ENCODE measurements at regions of chr5 and their contacts with region 1.

Region 1: DNA sequence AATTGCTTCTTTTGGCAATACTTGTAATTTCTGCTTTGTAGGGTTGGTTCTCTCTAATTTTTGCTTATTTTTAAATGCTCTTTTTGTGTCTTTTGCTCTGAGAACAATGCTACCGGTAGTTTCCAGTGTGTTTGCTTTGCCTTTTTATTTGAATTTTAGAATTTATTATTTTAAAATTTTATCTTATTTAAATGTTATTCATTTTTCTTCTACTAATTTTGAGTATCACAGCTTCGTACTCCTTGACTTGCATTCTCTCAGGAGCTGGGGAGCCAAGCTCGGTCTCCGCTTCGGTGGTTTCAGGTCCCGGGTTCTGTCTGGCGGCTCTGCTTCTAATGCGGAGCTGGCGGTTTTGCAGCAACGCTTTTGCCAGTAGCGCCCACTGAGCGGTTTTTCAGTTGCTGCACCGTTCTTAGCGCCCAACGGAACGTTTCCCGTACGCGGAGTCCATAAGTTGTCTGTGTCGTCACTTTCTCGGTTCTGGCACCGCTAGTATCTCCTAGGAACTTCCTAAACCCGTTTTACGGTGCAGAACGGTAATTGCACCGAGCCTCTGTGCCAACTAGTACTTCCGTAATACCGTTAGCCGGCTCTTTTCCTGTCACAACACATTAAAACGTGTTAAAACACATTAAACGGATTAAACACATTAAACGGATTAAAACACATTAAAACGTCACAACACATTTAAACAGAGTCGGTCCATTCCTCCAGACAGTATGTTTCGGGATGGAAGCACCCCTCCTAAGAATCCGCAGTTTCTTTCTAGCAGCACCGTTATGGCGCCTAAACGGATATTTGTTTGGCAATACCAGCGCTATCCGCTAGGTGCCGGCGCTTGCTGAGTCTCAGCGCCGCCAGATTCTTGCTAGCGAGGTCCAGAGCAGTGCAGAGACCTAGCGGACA is 45.6 kb downstream of the ANXA2R start:
- DNase-seq: peak in 9 of 10 donors; percentile 19 to 80 (median 74)
- H3K4me3 ChIP-seq: peak overlapping the region; percentile 0 to 70 (median 52)
- H3K27ac ChIP-seq: peak overlapping the region in 58 of 59 donors; percentile 3 to 94 (median 83)
- H3K27me3 ChIP-seq: peaks cover 15 to 100% (median 91%) of the 10 kb centered on the region in 45 donors
- CTCF ChIP-seq: peak; percentile 44 to 91 (median 75)

Region 2: DNA sequence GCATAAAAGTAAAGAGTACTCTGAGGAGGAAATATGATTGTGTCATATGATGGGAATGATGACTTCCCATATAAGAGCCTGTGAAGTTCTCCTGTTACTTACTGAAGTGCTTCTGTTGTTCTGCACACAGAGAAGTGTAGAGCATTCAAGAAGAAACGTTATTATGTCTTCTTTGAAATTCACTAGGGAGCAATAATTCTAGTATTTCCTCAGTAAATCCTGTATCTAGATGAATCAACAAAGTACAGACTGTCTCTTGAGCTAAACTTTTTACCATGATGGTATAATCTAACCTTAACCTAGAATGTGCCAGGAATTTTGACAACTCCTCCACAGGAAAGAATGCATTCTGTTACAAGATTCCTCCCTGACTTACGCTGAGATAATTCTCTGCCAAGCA is 590.1 kb before region 1 on chr5:
- intact Hi-C with region 1: no loop called
- DNase-seq: no peak
- H3K4me3 ChIP-seq: no peak overlapping the region
- H3K27ac ChIP-seq: no peak overlapping the region
- H3K27me3 ChIP-seq: peaks cover 0 to 6% (median 0%) of the 10 kb centered on the region in 45 donors
- CTCF ChIP-seq: no peak

Region 3: DNA sequence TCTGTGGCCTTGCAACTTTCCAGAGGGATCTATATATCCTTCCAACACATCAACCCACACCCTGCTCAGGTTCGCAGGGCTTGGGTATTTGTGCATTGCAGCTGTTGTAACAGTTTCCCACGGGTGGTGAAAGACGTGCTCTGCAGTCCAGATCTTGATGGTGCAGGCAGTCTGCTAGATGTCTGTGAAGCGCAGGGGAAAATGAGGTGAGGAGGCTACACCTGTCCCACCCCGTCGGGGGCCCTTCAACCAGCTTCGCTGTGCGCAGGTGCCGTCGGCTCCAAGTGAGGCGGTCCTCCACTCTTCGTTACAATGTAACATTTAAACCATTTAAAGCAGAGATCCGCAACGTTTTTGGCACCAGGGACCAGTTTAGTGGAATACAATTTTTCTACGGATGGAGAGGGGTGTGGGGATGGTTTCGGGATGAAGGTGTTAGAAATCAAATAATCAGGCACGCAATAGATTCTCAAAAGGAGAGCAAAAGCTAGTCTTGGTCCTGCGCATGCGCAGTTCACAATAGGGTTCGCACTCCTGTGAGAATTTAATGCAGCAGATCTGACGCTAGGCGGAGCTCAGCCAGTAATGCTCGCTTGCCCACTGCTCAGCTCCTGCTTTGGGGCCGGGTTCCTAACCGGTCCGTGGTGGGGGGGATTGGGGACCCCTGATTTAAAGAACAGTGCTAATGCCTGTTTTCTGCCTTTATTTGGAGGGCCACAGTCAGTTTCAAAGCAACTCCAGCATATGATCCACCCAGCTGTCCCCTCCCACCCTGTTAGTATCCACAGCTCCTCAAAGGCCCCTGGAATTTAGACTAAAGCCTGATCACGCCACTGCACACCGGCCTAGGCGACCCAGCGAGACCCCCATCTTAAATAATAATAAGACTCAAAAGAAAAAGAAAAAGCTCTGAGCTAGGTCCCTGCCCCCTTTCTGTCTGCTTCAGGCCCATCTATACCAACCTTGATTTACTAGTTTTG is 85.7 kb before region 1 on chr5:
- intact Hi-C with region 1: loop called (anchors 5 to 10 kb)
- DNase-seq: peak; percentile 71 to 91 (median 89)
- H3K4me3 ChIP-seq: peak overlapping the region; percentile 40 to 94 (median 65)
- H3K27ac ChIP-seq: peak overlapping the region in 10 of 59 donors; percentile 2 to 70 (median 27)
- H3K27me3 ChIP-seq: no peaks in the 10 kb centered on the region
- CTCF ChIP-seq: peak; percentile 58 to 94 (median 86)

Region 4: DNA sequence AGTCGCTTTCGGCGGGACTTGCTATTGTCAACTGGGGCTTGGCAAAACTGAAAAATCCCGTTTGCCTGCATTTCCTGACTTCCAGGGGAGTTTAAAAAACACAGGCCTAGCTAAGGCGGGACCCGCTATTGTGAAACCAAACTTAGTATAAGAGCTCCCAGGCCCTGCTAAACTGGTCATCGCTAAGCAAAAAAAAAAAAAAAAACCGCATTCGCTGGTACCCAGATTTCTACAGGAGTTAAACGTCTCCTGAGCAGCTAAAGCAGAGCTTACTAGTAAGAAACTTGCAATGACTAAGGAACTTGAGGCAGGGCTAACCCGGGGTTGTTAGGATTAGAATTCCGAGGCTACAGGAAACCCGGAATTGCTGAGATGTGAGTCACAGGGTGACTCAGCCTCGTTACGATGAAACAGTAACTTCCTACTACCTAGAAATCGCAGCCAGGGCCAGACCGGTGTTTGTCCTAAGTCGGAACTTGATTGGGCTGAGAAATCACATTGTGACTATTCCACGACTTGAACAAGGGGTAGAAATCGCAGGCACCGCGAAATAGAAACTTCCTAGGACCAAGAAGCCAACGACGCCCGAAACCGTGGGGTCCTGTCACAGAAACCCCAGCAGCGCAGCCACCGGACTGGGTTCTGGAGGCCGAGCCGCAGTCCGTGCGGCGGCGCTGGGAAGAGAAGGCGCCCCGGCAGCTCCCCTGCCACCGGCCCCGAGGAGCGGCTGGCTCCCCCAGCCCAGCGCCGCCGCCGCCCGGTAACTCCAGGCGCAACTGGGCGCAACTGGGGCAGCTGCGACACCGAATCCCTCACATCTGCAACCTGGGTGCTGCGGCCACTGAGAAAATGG is 43.8 kb before region 1 on chr5:
- intact Hi-C with region 1: loop called (anchors 5 kb)
- DNase-seq: no peak
- H3K4me3 ChIP-seq: peak overlapping the region; percentile 1 to 67 (median 48)
- H3K27ac ChIP-seq: peak overlapping the region in 49 of 59 donors; percentile 1 to 88 (median 67)
- H3K27me3 ChIP-seq: peaks cover 16 to 100% (median 88%) of the 10 kb centered on the region in 45 donors
- CTCF ChIP-seq: no peak

Region 5: GRCh38 chr5:43008369-43009153 is 14.1 kb after region 1 on chr5:
- intact Hi-C with region 1: loop called in 1 of 2 experiments (anchors 2 kb)
- DNase-seq: peak; percentile 12 to 82 (median 72)
- H3K4me3 ChIP-seq: peak overlapping the region; percentile 15 to 76 (median 56)
- H3K27ac ChIP-seq: peak overlapping the region; percentile 45 to 97 (median 91)
- H3K27me3 ChIP-seq: peaks cover 0 to 78% (median 61%) of the 10 kb centered on the region in 45 donors
- CTCF ChIP-seq: peak in 17 of 56 donors; percentile 2 to 42 (median 24)

Measured in dorsolateral prefrontal cortex (tissue), 120 donors.